Esophagus muscularis mucosa (tissue), 4 donors: ENCODE measurements at regions of chr6 and their contacts with region 1.

Region 1: GRCh38 chr6:30102970-30103874 is 9.7 kb downstream of the TRIM31 start:
- DNase-seq: peak; percentile 97
- H3K4me3 ChIP-seq: peak overlapping the region; percentile 43 to 64 (median 47)
- H3K27ac ChIP-seq: peak overlapping the region; percentile 73 to 79 (median 74)
- H3K4me1 ChIP-seq: peaks cover 32 to 40% (median 37%) of the 10 kb centered on the region in 4 donors
- H3K27me3 ChIP-seq: peaks cover 7 to 58% (median 22%) of the 10 kb centered on the region in 4 donors
- CTCF ChIP-seq: peak; percentile 82 to 95 (median 93)
- EP300 ChIP-seq: no peak
- POLR2A ChIP-seq: no peak

Region 2: GRCh38 chr6:29847871-29848630 is 255.2 kb before region 1 on chr6:
- intact Hi-C with region 1: no loop called
- DNase-seq: no peak
- H3K4me3 ChIP-seq: no peak overlapping the region
- H3K27ac ChIP-seq: no peak overlapping the region
- H3K4me1 ChIP-seq: peaks cover 0 to 7% (median 6%) of the 10 kb centered on the region in 4 donors
- H3K27me3 ChIP-seq: peaks cover 0 to 70% (median 14%) of the 10 kb centered on the region in 4 donors
- CTCF ChIP-seq: peak; percentile 79 to 97 (median 89)
- EP300 ChIP-seq: no peak
- POLR2A ChIP-seq: no peak

Region 3: GRCh38 chr6:30066577-30067459 is 36.4 kb before region 1 on chr6 and contains the start of gene PPP1R11:
- intact Hi-C with region 1: loop called (anchors 5 kb)
- DNase-seq: peak; percentile 99
- H3K4me3 ChIP-seq: peak within 1 kb of the TSS; percentile 68 to 79 (median 72)
- H3K27ac ChIP-seq: peak within 1 kb of the TSS; percentile 82 to 89 (median 88)
- H3K4me1 ChIP-seq: peaks cover 28 to 53% (median 49%) of the 10 kb centered on the region in 4 donors
- H3K27me3 ChIP-seq: peaks cover 0 to 15% (median 10%) of the 10 kb centered on the region in 4 donors
- CTCF ChIP-seq: peak in 1 of 3 experiments; percentile 4
- EP300 ChIP-seq: no peak
- POLR2A ChIP-seq: peak; percentile 45
- total RNA-seq, gene PPP1R11: 50.7 to 64.7 (median 60.2) TPM

Region 4: GRCh38 chr6:30130887-30131862 is 28.0 kb after region 1 on chr6:
- intact Hi-C with region 1: loop called (anchors 1 kb)
- DNase-seq: peak; percentile 90
- H3K4me3 ChIP-seq: no peak overlapping the region
- H3K27ac ChIP-seq: no peak overlapping the region
- H3K4me1 ChIP-seq: peaks cover 3 to 15% (median 13%) of the 10 kb centered on the region in 4 donors
- H3K27me3 ChIP-seq: peaks cover 0 to 90% (median 44%) of the 10 kb centered on the region in 4 donors
- CTCF ChIP-seq: peak; percentile 92 to 98 (median 93)
- EP300 ChIP-seq: no peak
- POLR2A ChIP-seq: no peak

Region 5: DNA sequence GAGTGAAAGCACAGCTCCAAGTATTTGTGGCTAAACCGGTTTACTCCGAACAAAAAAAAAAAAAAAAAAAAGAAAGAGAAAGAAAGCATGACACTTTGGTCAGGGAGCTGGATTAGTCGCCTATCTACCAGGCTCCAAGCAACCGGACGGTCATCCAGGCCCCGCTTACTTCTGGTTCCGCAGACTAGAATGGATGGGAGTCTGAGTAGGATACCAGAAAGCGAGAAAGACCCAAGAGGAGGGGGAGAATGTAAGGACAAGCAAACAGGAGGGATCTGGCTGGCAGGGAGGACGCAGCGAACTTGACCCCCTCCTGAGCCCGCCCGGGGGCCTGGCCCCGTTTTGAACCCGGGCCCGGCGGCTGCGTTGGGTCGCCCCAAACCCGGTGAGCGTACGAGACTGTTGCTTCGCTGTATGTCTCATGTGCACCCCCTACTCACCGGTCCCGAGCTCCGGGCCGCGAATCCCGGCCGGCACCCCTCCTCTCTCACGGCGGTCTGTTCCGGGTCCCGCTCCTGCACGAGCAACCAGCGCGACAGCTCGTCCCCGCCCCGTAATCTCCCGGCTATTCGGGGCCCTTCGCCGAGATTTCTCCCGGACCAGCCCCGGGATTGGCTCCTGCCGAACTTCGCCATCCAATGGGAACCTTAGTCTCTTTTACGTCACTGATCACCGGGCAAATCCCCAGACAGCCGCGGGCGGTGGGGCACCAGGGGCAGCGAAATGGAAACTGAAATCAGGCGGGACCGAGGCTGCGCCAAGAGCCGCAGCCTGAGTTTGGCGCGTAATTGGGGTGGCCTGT is 109.8 kb after region 1 on chr6 and contains the start of gene TRIM26:
- intact Hi-C with region 1: no loop called
- DNase-seq: peak; percentile 99
- H3K4me3 ChIP-seq: peak within 1 kb of the TSS; percentile 66 to 99 (median 86)
- H3K27ac ChIP-seq: peak within 1 kb of the TSS; percentile 93 to 98 (median 96)
- H3K4me1 ChIP-seq: peaks cover 29 to 56% (median 52%) of the 10 kb centered on the region in 4 donors
- H3K27me3 ChIP-seq: no peaks in the 10 kb centered on the region
- CTCF ChIP-seq: no peak
- EP300 ChIP-seq: no peak
- POLR2A ChIP-seq: peak; percentile 84
- total RNA-seq, gene TRIM26: 33.6 to 58.8 (median 46.3) TPM